ENCODE measurements at regions of chr20 and their contacts with region 1.

Region 1: GRCh38 chr20:38658879-38659596 is 57.4 kb downstream of the ARHGAP40 start:
- DNase-seq: peak; percentile 46
- H3K4me3 Mint-ChIP-seq: no peak overlapping the region
- H3K27ac Mint-ChIP-seq: no peak overlapping the region
- H3K4me1 Mint-ChIP-seq: no peaks in the 10 kb centered on the region
- H3K27me3 Mint-ChIP-seq: peaks cover 77% of the 10 kb centered on the region
- CTCF ChIP-seq: peak; percentile 71

Region 2: GRCh38 chr20:38674092-38674764 is 15.2 kb after region 1 on chr20:
- CTCF ChIA-PET with region 1: interaction called, 37 read pairs
- POLR2A ChIA-PET with region 1: no interaction called
- intact Hi-C with region 1: no loop called
- DNase-seq: no peak
- H3K4me3 Mint-ChIP-seq: no peak overlapping the region
- H3K27ac Mint-ChIP-seq: no peak overlapping the region
- H3K4me1 Mint-ChIP-seq: no peaks in the 10 kb centered on the region
- H3K27me3 Mint-ChIP-seq: peaks cover 24% of the 10 kb centered on the region
- CTCF ChIP-seq: no peak

Region 3: DNA sequence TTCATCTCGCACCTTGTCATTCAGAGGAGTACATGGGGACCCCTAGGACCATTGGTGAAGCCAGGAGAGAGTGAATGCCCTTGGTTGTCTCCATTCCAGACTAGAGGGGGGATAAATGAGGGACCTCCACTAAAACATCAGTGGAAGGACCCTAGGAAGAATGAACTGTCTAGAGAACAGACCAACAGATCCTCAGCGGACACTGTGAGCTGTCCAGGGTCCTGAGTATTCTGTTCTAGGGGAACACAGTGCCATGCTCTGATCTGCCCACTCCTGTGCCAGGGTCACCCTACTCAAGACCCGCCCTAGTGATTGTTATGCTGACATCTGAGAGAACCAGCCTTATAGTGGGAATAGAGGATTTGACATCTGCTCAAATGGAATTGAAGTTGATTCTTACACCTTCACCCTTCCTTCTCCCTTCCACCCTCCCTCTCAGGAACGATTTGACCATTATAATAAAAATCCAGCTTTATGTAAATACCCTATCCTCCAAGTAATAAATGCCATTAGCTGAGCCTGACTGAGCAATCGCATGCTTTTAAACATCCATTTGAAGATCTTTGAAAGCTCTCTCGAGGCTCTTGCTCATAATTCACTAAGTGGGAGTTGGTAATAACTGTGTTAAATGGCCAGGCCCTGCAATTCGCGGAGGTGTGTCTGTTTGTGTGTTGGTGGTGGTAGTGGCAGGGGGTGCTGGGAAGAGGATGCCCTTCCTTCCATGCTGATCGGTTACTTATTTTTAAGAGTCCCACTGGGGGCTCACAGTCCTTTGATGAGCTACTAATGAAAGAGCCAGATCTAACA is 21.7 kb after region 1 on chr20:
- CTCF ChIA-PET with region 1: interaction called, 10 read pairs
- POLR2A ChIA-PET with region 1: no interaction called
- intact Hi-C with region 1: no loop called
- DNase-seq: peak; percentile 57
- H3K4me3 Mint-ChIP-seq: no peak overlapping the region
- H3K27ac Mint-ChIP-seq: no peak overlapping the region
- H3K4me1 Mint-ChIP-seq: no peaks in the 10 kb centered on the region
- H3K27me3 Mint-ChIP-seq: peaks cover 37% of the 10 kb centered on the region
- CTCF ChIP-seq: no peak

Region 4: GRCh38 chr20:38730989-38731737 is 72.1 kb after region 1 on chr20:
- CTCF ChIA-PET with region 1: interaction called, 19 read pairs
- POLR2A ChIA-PET with region 1: no interaction called
- intact Hi-C with region 1: no loop called
- DNase-seq: peak; percentile 59
- H3K4me3 Mint-ChIP-seq: peak overlapping the region; percentile 52
- H3K27ac Mint-ChIP-seq: no peak overlapping the region
- H3K4me1 Mint-ChIP-seq: peaks cover 6% of the 10 kb centered on the region
- H3K27me3 Mint-ChIP-seq: peaks cover 93% of the 10 kb centered on the region
- CTCF ChIP-seq: peak; percentile 95

Region 5: GRCh38 chr20:38764567-38765355 is 105.7 kb after region 1 on chr20:
- CTCF ChIA-PET with region 1: interaction called, 16 read pairs
- POLR2A ChIA-PET with region 1: no interaction called
- intact Hi-C with region 1: no loop called
- DNase-seq: peak; percentile 87
- H3K4me3 Mint-ChIP-seq: no peak overlapping the region
- H3K27ac Mint-ChIP-seq: no peak overlapping the region
- H3K4me1 Mint-ChIP-seq: peaks cover 16% of the 10 kb centered on the region
- H3K27me3 Mint-ChIP-seq: no peaks in the 10 kb centered on the region
- CTCF ChIP-seq: no peak

Region 6: GRCh38 chr20:38825901-38826625 is 167.0 kb after region 1 on chr20:
- CTCF ChIA-PET with region 1: no interaction called
- POLR2A ChIA-PET with region 1: no interaction called
- intact Hi-C with region 1: no loop called
- DNase-seq: peak; percentile 80
- H3K4me3 Mint-ChIP-seq: no peak overlapping the region
- H3K27ac Mint-ChIP-seq: no peak overlapping the region
- H3K4me1 Mint-ChIP-seq: peaks cover 14% of the 10 kb centered on the region
- H3K27me3 Mint-ChIP-seq: no peaks in the 10 kb centered on the region
- CTCF ChIP-seq: no peak

Measured in MCF 10A (cell line).